Dorsolateral prefrontal cortex (tissue), 120 donors: ENCODE measurements at regions of chr6 and their contacts with region 1.

Region 1: DNA sequence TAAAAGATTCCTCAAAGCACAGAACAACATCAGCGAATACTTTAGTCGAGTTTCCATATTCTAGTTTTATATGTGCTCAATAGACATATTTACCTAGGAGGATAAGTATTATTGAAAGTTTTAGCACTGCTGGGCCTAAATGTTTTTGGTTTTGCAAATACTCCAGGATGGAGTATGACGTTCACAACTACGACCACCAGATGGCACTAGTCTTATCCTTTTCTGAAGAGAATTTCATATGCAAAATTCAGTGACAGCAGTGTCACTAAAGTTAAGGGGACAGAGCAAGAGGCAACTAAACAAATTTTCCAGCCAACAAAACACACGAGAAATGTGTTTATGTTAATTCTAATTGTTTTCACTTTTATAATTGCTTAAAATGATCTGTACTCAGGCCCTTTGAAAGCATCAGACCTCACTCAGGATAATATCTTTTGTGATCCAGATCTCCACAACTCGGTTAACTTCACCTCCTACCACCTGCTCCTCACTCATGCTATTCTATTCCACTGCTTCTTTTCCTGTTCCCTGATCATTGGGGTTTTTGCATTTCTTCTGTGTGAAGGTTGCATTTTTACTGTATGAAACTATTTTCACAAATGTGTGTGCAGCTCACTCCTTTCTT is 220.8 kb downstream of the TRDN start:
- DNase-seq: peak in 7 of 10 donors; percentile 34 to 85 (median 55)
- H3K4me3 ChIP-seq: no peak overlapping the region
- H3K27ac ChIP-seq: no peak overlapping the region
- H3K27me3 ChIP-seq: no peaks in the 10 kb centered on the region
- CTCF ChIP-seq: peak; percentile 63 to 94 (median 85)

Region 2: GRCh38 chr6:123182998-123183397 is 233.0 kb before region 1 on chr6:
- intact Hi-C with region 1: no loop called
- DNase-seq: no peak
- H3K4me3 ChIP-seq: no peak overlapping the region
- H3K27ac ChIP-seq: no peak overlapping the region
- H3K27me3 ChIP-seq: no peaks in the 10 kb centered on the region
- CTCF ChIP-seq: no peak

Region 3: DNA sequence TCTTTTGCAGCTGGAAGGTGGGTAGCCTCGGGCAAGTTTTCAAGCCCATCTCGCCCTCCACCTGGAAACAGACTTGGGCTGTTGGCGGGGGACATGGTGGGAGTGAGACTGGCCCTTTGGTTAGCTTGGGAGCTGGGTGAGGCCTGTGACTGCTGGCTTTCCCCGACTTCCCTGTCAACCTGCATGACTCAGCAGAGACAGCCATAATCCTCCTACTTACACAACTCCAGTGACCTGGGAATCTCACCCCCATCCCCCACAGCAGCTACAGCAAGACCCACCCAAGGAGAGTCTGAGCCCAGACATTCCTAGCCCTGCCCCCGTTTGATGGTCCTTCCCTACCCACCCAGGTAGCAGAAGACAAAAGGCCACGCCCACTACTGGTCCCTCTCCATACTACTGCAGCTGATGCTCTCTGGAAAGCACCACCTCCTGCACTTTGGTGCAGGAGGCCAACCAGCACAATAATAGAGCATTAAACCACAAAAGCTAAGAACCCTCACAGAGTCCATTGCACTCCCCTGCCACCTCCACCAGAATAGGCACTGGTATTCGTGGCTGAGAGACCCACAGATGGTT is 32.4 kb after region 1 on chr6:
- intact Hi-C with region 1: no loop called
- DNase-seq: no peak
- H3K4me3 ChIP-seq: no peak overlapping the region
- H3K27ac ChIP-seq: no peak overlapping the region
- H3K27me3 ChIP-seq: no peaks in the 10 kb centered on the region
- CTCF ChIP-seq: no peak

Region 4: GRCh38 chr6:123715006-123715875 is 299.3 kb after region 1 on chr6:
- intact Hi-C with region 1: loop called (anchors 2 to 5 kb)
- DNase-seq: no peak
- H3K4me3 ChIP-seq: no peak overlapping the region
- H3K27ac ChIP-seq: no peak overlapping the region
- H3K27me3 ChIP-seq: no peaks in the 10 kb centered on the region
- CTCF ChIP-seq: peak; percentile 31 to 86 (median 64)

Region 5: GRCh38 chr6:123759472-123759871 is 343.5 kb after region 1 on chr6:
- intact Hi-C with region 1: no loop called
- DNase-seq: no peak
- H3K4me3 ChIP-seq: no peak overlapping the region
- H3K27ac ChIP-seq: no peak overlapping the region
- H3K27me3 ChIP-seq: peaks cover 0 to 3% (median 0%) of the 10 kb centered on the region in 45 donors
- CTCF ChIP-seq: no peak

Region 6: GRCh38 chr6:124795643-124796463 is 1379.9 kb after region 1 on chr6:
- intact Hi-C with region 1: loop called in 1 of 2 experiments (anchors 5 kb)
- DNase-seq: peak; percentile 46 to 81 (median 67)
- H3K4me3 ChIP-seq: no peak overlapping the region
- H3K27ac ChIP-seq: peak overlapping the region in 4 of 59 donors; percentile 1 to 65 (median 26)
- H3K27me3 ChIP-seq: no peaks in the 10 kb centered on the region
- CTCF ChIP-seq: peak in 55 of 56 donors; percentile 24 to 82 (median 67)